Pancreas (tissue), 10 donors: ENCODE measurements at regions of chr22 and their contacts with region 1.

Region 1: GRCh38 chr22:24525416-24526037 is 29.4 kb downstream of the GUCD1 start:
- DNase-seq: peak in 5 of 6 donors; percentile 70 to 82 (median 81)
- ATAC-seq: peak; percentile 70 to 86 (median 82)
- H3K4me3 ChIP-seq: no peak overlapping the region
- H3K27ac ChIP-seq: no peak overlapping the region
- H3K4me1 ChIP-seq: peaks cover 0 to 10% (median 5%) of the 10 kb centered on the region in 3 donors
- H3K27me3 ChIP-seq: no peaks in the 10 kb centered on the region
- CTCF ChIP-seq: peak; percentile 47 to 77 (median 74)

Region 2: DNA sequence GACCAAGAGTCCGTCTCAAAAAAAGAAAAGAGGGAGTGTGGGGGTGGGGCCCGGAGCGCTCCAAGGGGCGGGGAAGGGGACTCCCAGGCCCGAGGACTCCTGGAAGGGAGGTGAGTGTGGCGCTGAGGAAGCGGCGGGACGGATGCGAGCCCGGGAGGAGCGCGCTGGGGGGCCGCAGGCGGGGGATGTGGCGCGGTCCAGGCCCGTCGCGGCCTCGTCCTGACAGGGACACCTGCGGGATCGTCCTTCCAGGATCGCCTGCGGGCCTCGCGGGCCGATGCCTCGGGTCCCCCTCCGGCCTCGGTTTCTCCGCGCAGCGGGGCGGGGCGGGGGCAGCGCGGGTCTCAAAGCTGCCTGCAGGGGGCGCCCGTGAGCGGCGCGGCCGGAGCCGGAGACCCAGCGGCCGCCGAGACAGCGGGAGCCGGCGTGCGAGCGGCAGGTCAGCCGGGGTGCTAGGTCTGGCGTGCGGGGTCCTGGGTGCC is 102.0 kb before region 1 on chr22:
- intact Hi-C with region 1: loop called in 2 of 3 experiments (anchors 5 kb)
- DNase-seq: peak in 3 of 6 donors; percentile 54 to 92 (median 70)
- ATAC-seq: peak; percentile 79 to 86 (median 81)
- H3K4me3 ChIP-seq: peak overlapping the region; percentile 25 to 68 (median 37)
- H3K27ac ChIP-seq: no peak overlapping the region
- H3K4me1 ChIP-seq: no peaks in the 10 kb centered on the region
- H3K27me3 ChIP-seq: no peaks in the 10 kb centered on the region
- CTCF ChIP-seq: peak; percentile 86 to 94 (median 89)